Activated CD4-positive, alpha-beta T cell treated with anti-CD3 and anti-CD28 coated beads for 36 hours (primary cell): ENCODE measurements at regions of chr5 and their contacts with region 1.

Region 1: DNA sequence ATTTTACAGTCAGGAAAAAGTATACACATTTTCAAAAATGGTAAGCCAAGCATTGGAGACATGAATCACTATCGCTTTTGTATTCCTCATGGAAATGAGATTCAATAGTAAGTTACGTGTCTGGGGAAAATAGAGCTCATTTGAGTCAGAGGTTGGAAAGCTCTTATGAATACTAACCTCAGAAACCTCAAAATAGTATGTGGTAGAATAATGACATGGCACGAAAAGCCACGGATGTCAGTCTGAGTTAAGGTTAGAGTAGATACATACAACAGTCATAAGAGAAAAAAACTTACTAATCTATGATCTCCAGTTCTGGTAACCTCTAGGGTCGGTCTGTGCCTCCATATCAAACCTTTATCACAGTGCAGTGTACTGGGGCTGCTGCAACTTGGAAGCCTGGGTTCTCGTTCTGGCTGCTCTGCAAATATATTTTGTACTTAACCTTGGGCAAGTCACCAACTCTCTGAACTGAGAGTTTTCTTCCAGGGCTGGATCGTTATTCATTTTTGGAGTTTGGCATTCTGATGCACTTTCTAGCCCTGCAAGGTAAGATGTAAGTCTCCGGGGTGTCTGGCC is 31.8 kb downstream of the MAP1B start:
- DNase-seq: peak; percentile 32
- ATAC-seq: peak; percentile 100
- H3K4me3 Mint-ChIP-seq: no peak overlapping the region
- H3K27ac Mint-ChIP-seq: peak overlapping the region; percentile 33
- H3K4me1 Mint-ChIP-seq: peaks cover 15% of the 10 kb centered on the region
- H3K27me3 Mint-ChIP-seq: peaks cover 53% of the 10 kb centered on the region

Region 2: GRCh38 chr5:71782771-71783770 is 356.0 kb before region 1 on chr5:
- CTCF ChIA-PET with region 1: no interaction called
- POLR2A ChIA-PET with region 1: no interaction called
- intact Hi-C with region 1: loop called in 1 of 2 experiments (anchors 10 kb)
- DNase-seq: peak; percentile 85
- ATAC-seq: peak; percentile 97
- H3K4me3 Mint-ChIP-seq: peak overlapping the region; percentile 29
- H3K27ac Mint-ChIP-seq: peak overlapping the region; percentile 62
- H3K4me1 Mint-ChIP-seq: peaks cover 26% of the 10 kb centered on the region
- H3K27me3 Mint-ChIP-seq: peaks cover 4% of the 10 kb centered on the region

Region 3: GRCh38 chr5:71887680-71888079 is 251.4 kb before region 1 on chr5:
- CTCF ChIA-PET with region 1: no interaction called
- POLR2A ChIA-PET with region 1: no interaction called
- intact Hi-C with region 1: no loop called
- DNase-seq: peak; percentile 8
- ATAC-seq: peak; percentile 100
- H3K4me3 Mint-ChIP-seq: peak overlapping the region; percentile 20
- H3K27ac Mint-ChIP-seq: no peak overlapping the region
- H3K4me1 Mint-ChIP-seq: peaks cover 2% of the 10 kb centered on the region
- H3K27me3 Mint-ChIP-seq: peaks cover 13% of the 10 kb centered on the region

Region 4: GRCh38 chr5:72092074-72092473 is 47.0 kb before region 1 on chr5:
- CTCF ChIA-PET with region 1: no interaction called
- POLR2A ChIA-PET with region 1: no interaction called
- intact Hi-C with region 1: no loop called
- DNase-seq: no peak
- ATAC-seq: no peak
- H3K4me3 Mint-ChIP-seq: no peak overlapping the region
- H3K27ac Mint-ChIP-seq: no peak overlapping the region
- H3K4me1 Mint-ChIP-seq: peaks cover 6% of the 10 kb centered on the region
- H3K27me3 Mint-ChIP-seq: peaks cover 29% of the 10 kb centered on the region

Region 5: GRCh38 chr5:72194846-72195245 is 55.8 kb after region 1 on chr5:
- CTCF ChIA-PET with region 1: no interaction called
- POLR2A ChIA-PET with region 1: no interaction called
- intact Hi-C with region 1: loop called (anchors 1 to 2 kb)
- DNase-seq: peak; percentile 61
- ATAC-seq: peak; percentile 49
- H3K4me3 Mint-ChIP-seq: no peak overlapping the region
- H3K27ac Mint-ChIP-seq: peak overlapping the region; percentile 44
- H3K4me1 Mint-ChIP-seq: peaks cover 10% of the 10 kb centered on the region
- H3K27me3 Mint-ChIP-seq: peaks cover 47% of the 10 kb centered on the region

Region 6: GRCh38 chr5:72234265-72234700 is 95.3 kb after region 1 on chr5:
- CTCF ChIA-PET with region 1: no interaction called
- POLR2A ChIA-PET with region 1: no interaction called
- intact Hi-C with region 1: loop called (anchors 1 kb)
- DNase-seq: peak; percentile 32
- ATAC-seq: peak; percentile 94
- H3K4me3 Mint-ChIP-seq: no peak overlapping the region
- H3K27ac Mint-ChIP-seq: no peak overlapping the region
- H3K4me1 Mint-ChIP-seq: peaks cover 40% of the 10 kb centered on the region
- H3K27me3 Mint-ChIP-seq: no peaks in the 10 kb centered on the region

Region 7: DNA sequence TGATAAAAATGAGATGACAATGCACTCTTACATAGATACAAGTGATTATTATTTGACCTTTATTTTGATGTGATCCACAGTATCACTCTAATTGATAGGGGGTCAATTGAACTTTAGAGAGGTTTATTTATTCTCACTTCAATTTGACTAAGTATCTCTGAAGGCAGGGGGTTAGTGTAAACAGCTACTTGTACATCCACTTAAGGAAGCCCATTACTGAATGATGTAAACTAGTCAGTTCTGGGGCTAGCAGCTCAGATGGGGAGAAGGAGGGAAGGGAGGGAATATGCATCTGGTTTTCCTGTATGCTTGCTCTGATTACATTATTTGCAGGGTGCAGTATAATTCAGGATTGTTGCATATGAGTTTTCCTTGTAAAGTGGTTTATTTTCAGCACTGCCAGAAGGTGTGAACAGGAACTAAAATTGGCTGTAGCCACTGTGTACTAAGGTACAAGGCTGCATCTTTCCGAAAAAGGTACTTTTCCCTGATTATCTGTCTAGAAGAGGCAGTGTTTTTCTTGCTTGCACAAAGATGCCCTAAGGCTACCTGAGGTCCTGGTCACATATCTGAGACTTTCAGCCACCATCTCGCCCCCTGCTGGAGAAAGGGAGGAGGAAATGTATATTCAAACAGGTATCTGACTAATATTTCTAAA is 129.8 kb after region 1 on chr5:
- CTCF ChIA-PET with region 1: no interaction called
- POLR2A ChIA-PET with region 1: no interaction called
- intact Hi-C with region 1: loop called (anchors 1 to 2 kb)
- DNase-seq: peak; percentile 63
- ATAC-seq: no peak
- H3K4me3 Mint-ChIP-seq: no peak overlapping the region
- H3K27ac Mint-ChIP-seq: no peak overlapping the region
- H3K4me1 Mint-ChIP-seq: peaks cover 2% of the 10 kb centered on the region
- H3K27me3 Mint-ChIP-seq: no peaks in the 10 kb centered on the region

Region 8: DNA sequence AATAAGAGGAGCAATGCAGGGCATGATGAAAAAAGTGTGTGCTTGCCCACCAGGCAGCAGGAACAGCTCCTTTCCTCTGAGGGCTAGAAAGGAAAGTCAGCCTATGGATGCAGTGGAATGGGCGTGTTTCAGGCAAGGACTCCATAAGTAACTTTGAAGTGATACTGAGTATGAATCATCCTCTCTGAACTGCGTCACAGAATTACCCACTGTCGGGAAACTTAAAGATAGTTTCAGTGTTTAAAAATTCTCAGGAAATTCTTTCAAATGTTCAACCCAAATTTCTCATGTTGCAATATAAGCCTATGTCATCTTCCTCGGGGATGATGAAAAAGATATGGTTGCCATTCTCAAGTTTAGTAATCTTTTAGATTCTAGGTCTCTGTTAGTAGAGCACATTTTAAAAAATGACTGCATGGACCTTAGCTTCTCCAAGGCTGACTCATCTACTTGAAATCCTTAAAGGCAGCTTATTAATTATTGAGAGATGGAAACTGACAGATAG is 208.8 kb after region 1 on chr5:
- CTCF ChIA-PET with region 1: no interaction called
- POLR2A ChIA-PET with region 1: no interaction called
- intact Hi-C with region 1: loop called (anchors 2 to 5 kb)
- DNase-seq: peak; percentile 32
- ATAC-seq: peak; percentile 93
- H3K4me3 Mint-ChIP-seq: no peak overlapping the region
- H3K27ac Mint-ChIP-seq: peak overlapping the region; percentile 82
- H3K4me1 Mint-ChIP-seq: peaks cover 38% of the 10 kb centered on the region
- H3K27me3 Mint-ChIP-seq: no peaks in the 10 kb centered on the region